ENCODE measurements at regions of chr1 and their contacts with region 1.

Region 1: DNA sequence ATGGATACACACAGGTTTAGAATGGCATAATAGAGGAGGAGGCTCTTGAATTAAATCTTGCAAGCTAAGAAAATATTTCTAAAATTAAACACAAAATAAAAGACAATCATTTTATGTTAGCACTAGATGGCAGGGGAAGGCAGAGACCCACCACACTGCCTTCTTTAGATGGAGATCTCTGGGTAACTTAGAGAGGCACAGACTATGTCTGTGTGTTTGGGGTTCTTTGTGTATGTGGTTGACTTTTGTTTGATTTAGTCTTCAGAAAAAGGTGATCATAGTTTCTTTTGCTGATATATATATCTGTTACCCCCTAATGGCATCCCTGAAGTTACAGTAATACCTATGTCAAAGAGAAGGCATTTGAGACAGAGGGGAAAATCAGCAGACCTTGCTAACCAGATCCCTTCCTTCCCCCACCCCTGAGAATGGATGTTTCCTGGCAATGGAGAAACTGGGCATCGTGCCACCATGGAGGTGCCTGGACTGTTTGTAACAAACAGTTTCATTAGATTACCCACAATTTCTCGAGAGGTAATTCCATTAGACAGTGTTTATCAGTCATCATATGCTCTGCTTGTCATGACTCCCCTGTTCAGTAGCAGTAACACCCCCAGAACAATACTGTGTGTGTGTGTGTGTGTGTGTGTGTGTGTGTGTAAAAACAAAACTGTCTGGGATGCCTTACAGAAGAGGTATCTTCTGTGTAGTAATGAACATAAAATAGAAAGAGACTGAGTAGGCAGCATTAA is 228.3 kb upstream of the DEPDC1 start:
- DNase-seq: peak; percentile 58
- H3K4me3 Mint-ChIP-seq: no peak overlapping the region
- H3K27ac Mint-ChIP-seq: no peak overlapping the region
- H3K4me1 Mint-ChIP-seq: peaks cover 10% of the 10 kb centered on the region
- H3K27me3 Mint-ChIP-seq: no peaks in the 10 kb centered on the region
- CTCF ChIP-seq: no peak

Region 2: GRCh38 chr1:68644521-68644920 is 80.7 kb before region 1 on chr1:
- CTCF ChIA-PET with region 1: no interaction called
- intact Hi-C with region 1: no loop called
- DNase-seq: no peak
- H3K4me3 Mint-ChIP-seq: no peak overlapping the region
- H3K27ac Mint-ChIP-seq: no peak overlapping the region
- H3K4me1 Mint-ChIP-seq: no peaks in the 10 kb centered on the region
- H3K27me3 Mint-ChIP-seq: no peaks in the 10 kb centered on the region
- CTCF ChIP-seq: no peak

Region 3: DNA sequence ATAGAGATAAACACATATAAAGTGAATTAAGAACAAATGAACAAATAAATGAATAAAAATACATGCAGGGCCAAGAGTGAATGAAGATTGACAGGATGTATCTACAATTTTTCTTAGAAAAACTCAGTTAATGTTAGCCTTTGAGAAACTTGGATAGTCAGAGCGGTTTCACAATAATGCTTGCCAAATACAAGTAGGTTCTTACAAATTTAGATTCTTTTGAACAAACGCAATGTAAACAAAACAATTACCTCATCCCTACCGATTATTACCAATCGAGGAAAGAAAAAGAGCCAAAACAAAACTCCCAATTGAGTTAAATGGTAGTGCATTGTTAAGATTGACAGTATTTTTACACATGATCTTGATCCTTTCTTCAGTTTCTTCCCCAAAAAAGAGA is 51.4 kb before region 1 on chr1:
- CTCF ChIA-PET with region 1: no interaction called
- intact Hi-C with region 1: loop called (anchors 5 kb)
- DNase-seq: no peak
- H3K4me3 Mint-ChIP-seq: no peak overlapping the region
- H3K27ac Mint-ChIP-seq: no peak overlapping the region
- H3K4me1 Mint-ChIP-seq: no peaks in the 10 kb centered on the region
- H3K27me3 Mint-ChIP-seq: no peaks in the 10 kb centered on the region
- CTCF ChIP-seq: no peak

Region 4: GRCh38 chr1:68745011-68745410 is 19.8 kb after region 1 on chr1:
- CTCF ChIA-PET with region 1: no interaction called
- intact Hi-C with region 1: no loop called
- DNase-seq: no peak
- H3K4me3 Mint-ChIP-seq: no peak overlapping the region
- H3K27ac Mint-ChIP-seq: no peak overlapping the region
- H3K4me1 Mint-ChIP-seq: no peaks in the 10 kb centered on the region
- H3K27me3 Mint-ChIP-seq: no peaks in the 10 kb centered on the region
- CTCF ChIP-seq: no peak